ENCODE measurements at regions of chr1 and their contacts with region 1.

Region 1: GRCh38 chr1:170664828-170665612 is 1.1 kb downstream of the PRRX1 start:
- DNase-seq: peak in 4 of 5 donors; percentile 48 to 64 (median 58)
- H3K4me3 ChIP-seq: peak overlapping the region; percentile 78
- H3K27ac ChIP-seq: peak overlapping the region; percentile 85 to 97
- H3K4me1 ChIP-seq: peaks cover 2% of the 10 kb centered on the region
- H3K27me3 ChIP-seq: no peaks in the 10 kb centered on the region
- CTCF ChIP-seq: peak in 1 of 3 donors; percentile 37
- EP300 ChIP-seq: no peak
- POLR2A ChIP-seq: peak; percentile 24

Region 2: DNA sequence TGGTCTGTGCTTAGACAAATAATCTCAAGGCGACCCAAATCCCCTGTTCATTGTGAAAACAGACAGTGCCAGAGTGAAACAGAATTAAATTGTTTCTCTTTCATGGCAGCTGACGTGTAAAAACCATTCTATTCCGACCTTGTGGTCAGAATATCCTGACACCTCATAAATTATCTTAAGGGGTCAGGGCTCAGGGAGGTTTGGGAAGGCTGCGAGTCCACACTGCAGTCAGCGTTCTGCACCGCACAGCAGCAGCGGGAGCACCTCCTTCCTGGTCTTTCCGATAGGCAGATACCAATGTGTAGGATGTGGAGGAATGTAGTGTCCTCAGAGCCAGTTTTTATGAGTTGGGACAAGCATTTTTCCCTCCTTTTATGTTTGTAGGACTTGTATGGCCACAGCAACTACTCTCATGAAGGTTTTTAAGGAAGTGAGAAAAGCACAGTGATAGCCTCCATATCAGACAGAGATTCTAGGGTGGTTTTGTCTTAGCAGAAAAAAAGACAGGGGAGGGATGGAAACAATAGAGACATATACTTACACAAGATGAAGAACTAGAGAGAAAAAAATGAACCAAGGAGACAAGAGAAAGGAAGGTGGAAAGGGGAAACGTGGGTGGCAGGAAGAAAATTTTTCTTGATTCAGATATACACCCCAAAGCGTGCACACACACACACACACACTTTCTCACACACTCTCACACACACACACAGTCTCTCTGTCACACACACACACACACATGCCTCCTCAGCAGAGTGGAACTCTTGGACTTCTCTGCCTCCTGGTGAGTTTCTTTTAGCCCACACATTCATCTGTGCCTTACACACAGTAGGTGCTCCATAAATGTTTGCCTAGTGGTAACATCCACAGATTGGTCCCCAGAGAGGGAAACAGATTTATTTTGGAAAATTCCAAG is 450.6 kb before region 1 on chr1:
- intact Hi-C with region 1: loop called in 1 of 4 experiments (anchors 10 kb)
- DNase-seq: no peak
- H3K4me3 ChIP-seq: no peak overlapping the region
- H3K27ac ChIP-seq: no peak overlapping the region
- H3K4me1 ChIP-seq: peaks cover 7% of the 10 kb centered on the region
- H3K27me3 ChIP-seq: no peaks in the 10 kb centered on the region
- CTCF ChIP-seq: no peak
- EP300 ChIP-seq: no peak
- POLR2A ChIP-seq: no peak

Region 3: DNA sequence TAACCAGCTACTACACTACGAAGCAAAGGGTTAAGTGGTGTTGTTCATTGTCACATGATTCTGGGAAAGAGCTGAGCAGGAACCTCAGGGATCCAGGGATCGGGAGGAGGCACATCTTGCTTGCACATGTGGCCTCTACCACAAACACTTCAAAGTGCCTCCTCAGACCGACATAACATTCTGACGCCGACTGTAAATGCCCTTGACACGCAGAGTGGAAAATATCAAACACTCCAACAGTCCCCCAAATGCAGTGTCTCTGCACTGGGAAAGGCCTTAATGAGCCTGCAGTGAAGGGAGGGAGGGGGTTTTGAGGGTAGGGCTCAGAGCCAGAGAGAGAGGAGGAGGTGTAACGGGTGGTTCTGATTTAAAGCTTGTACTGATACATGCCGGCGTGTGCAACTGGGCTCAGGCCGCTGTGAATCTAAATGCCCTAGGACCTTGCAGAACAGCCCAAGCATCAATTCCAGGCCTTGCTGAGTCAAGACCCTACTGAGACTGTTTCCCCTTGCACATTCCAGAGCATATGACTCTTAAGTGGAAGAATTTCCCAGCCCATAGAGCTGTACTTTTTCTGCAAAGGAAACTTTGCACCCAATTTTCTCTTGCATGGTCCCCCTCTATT is 355.5 kb before region 1 on chr1:
- intact Hi-C with region 1: loop called in 1 of 4 experiments (anchors 2 kb)
- DNase-seq: peak; percentile 51 to 76 (median 64)
- H3K4me3 ChIP-seq: no peak overlapping the region
- H3K27ac ChIP-seq: peak overlapping the region in 1 of 2 donors; percentile 48
- H3K4me1 ChIP-seq: peaks cover 2% of the 10 kb centered on the region
- H3K27me3 ChIP-seq: no peaks in the 10 kb centered on the region
- CTCF ChIP-seq: no peak
- EP300 ChIP-seq: no peak
- POLR2A ChIP-seq: no peak

Region 4: DNA sequence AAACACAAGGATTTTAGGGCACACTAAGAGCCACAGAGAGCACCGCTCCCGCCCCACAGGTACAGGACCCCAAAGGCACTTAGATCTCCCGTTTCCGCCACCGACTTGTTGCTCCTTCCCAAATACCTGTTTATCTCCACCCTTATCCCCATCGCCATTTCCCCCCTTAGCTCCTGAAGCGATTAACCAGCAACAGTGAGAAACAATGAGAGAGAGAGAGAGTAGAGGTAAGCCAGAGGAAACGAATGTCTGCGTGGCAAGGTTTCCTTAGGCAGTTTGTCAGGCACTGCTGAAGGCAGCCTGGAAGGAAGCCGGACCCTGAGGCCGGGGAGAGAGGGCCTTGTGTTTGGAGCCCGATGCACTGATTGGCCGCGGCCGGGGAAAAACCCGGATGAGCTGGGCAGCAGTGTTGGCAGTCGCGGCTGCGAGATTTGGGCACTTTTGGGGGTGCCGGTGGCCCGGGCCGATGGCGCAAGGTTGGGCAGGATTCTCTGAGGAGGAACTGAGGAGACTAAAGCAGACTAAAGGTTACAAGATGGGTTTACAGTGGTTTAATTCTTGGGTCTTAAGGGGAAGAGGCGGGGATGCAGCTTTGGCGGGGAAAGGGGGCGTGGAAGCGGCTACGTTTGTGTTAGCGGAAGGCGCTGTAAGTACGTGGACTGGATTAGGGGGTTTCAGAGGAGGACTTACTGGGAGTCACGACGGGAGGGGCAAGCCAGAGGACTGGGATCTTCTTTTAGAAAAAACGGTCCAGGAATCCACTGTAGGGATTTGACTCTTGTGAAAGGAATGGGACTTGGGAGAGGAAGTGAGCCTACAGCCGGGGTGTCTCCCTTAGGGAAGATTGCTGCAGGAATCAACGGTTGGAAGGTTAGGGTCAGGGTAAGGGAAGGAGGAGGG is 133.0 kb before region 1 on chr1 and contains the start of gene GORAB:
- intact Hi-C with region 1: loop called in 1 of 4 experiments (anchors 5 kb)
- DNase-seq: peak; percentile 88 to 91 (median 90)
- H3K4me3 ChIP-seq: peak within 1 kb of the TSS; percentile 67
- H3K27ac ChIP-seq: peak within 1 kb of the TSS; percentile 84 to 94
- H3K4me1 ChIP-seq: peaks cover 5% of the 10 kb centered on the region
- H3K27me3 ChIP-seq: no peaks in the 10 kb centered on the region
- CTCF ChIP-seq: no peak
- EP300 ChIP-seq: no peak
- POLR2A ChIP-seq: peak; percentile 43
- total RNA-seq, gene GORAB: 9.1 to 24.0 (median 12.0) TPM

Region 5: GRCh38 chr1:170545476-170545875 is 119.5 kb before region 1 on chr1:
- intact Hi-C with region 1: loop called in 1 of 4 experiments (anchors 5 kb)
- DNase-seq: no peak
- H3K4me3 ChIP-seq: no peak overlapping the region
- H3K27ac ChIP-seq: no peak overlapping the region
- H3K4me1 ChIP-seq: no peaks in the 10 kb centered on the region
- H3K27me3 ChIP-seq: no peaks in the 10 kb centered on the region
- CTCF ChIP-seq: no peak
- EP300 ChIP-seq: no peak
- POLR2A ChIP-seq: no peak

Region 6: GRCh38 chr1:170586321-170587252 is 78.4 kb before region 1 on chr1:
- intact Hi-C with region 1: loop called in 1 of 4 experiments (anchors 10 kb)
- DNase-seq: peak in 4 of 5 donors; percentile 26 to 62 (median 48)
- H3K4me3 ChIP-seq: peak overlapping the region; percentile 18
- H3K27ac ChIP-seq: peak overlapping the region in 1 of 2 donors; percentile 57
- H3K4me1 ChIP-seq: peaks cover 2% of the 10 kb centered on the region
- H3K27me3 ChIP-seq: no peaks in the 10 kb centered on the region
- CTCF ChIP-seq: no peak
- EP300 ChIP-seq: no peak
- POLR2A ChIP-seq: no peak

Region 7: DNA sequence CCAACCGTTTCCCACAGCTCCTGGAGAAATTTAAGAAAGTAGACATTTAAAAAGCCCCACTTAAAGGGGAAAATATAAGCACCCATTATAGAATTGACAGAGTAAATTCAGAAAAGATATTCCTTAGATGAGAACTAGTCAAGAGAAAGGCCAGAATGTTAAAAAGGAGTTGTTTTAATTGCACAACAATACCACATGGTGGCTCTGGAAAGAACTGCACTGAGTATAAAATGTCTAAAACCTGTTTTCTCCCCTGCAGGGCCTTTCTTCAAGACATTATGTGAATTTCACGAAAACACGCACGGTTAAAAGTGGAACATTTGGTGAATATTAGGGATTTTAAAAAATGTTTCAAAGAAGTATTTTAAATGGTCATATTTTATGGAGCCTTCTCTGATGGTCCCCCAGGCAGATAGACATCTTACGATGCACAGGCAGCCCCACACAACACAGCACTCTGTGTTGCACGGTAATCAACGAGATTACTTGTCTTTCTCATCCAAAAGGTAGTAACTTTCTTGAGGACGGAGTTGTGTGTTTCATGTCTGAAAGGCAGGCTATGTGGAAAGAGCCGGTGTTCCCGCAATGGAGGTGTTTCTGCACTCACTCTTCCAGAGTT is 100.8 kb after region 1 on chr1:
- intact Hi-C with region 1: loop called in 1 of 4 experiments (anchors 10 kb)
- DNase-seq: no peak
- H3K4me3 ChIP-seq: no peak overlapping the region
- H3K27ac ChIP-seq: no peak overlapping the region
- H3K4me1 ChIP-seq: no peaks in the 10 kb centered on the region
- H3K27me3 ChIP-seq: no peaks in the 10 kb centered on the region
- CTCF ChIP-seq: peak; percentile 44 to 86 (median 55)
- EP300 ChIP-seq: no peak
- POLR2A ChIP-seq: no peak

Measured in ovary (tissue), 10 donors.